IMR-90 (cell line): ENCODE measurements at regions of chr11 and their contacts with region 1.

Region 1: DNA sequence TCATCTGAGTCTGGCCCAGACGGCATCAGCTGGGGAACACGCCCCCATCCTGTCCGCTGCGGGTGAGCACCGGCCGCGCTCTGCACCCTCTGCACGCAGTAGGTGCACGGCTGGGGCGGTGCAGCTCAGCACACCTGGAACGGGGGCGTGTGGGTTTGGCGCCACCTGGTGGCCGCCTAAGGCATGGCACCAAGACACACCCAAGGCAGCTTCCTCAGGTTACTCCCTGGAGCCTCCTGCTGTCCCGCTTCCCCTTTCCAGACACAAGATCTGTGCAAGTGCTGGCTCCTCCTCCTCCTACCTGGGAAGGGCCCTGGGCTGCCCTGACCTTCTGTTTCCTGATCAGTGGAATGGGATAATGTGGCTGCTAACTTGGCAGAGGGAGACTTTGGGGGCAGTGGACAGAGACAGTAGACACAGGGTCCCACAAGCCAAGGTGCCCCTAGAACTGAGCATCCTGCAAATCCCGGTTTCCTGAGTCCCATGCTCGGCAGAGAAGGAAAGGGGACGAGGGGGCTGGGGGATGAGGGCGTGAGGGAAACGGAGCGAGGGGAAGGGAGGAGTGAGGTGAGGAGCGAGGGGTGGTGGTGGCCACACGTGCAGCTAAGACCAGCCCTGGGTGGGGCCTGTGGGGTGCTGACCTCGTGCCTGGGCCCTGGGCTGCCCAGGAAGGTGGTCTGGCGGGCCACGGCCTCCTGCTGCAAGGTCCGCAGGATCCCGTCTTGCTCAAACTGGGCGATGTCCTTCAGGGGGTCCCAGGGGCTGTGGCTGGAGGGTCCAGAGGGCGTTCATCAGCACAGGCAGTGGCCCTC is 34.8 kb upstream of the CARS1 start:
- DNase-seq: peak; percentile 44
- ATAC-seq: peak; percentile 64
- H3K4me3 ChIP-seq: no peak overlapping the region
- H3K27ac ChIP-seq: no peak overlapping the region
- H3K4me1 ChIP-seq: peaks cover 9% of the 10 kb centered on the region
- H3K27me3 ChIP-seq: no peaks in the 10 kb centered on the region
- CTCF ChIP-seq: peak; percentile 96
- POLR2A ChIP-seq: no peak
- RAD21 ChIP-seq: peak; percentile 93

Region 2: DNA sequence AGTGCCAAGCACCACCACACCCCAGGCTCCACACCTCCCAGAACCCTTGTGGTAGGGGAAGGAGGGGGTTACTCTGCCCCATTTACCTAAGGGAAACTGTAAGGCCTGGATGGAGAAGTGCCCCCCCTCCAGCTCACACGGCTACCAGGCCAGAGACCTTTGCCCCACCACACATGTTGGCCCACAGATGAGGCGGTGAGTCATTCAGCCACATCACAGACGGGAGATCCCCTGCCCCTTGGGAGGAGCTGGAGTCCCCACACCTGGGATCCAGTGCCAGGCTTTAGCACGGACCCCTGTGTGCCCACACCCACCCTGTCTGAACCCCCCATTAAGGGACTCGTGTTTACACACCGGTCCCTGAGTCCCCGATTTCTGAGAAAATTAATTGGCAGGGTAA is 231.4 kb before region 1 on chr11:
- CTCF ChIA-PET with region 1: no interaction called
- POLR2A ChIA-PET with region 1: no interaction called
- dilution Hi-C with region 1: no loop called
- in situ Hi-C with region 1: no loop called
- intact Hi-C with region 1: no loop called
- DNase-seq: peak; percentile 51
- ATAC-seq: no peak
- H3K4me3 ChIP-seq: no peak overlapping the region
- H3K27ac ChIP-seq: no peak overlapping the region
- H3K4me1 ChIP-seq: peaks cover 2% of the 10 kb centered on the region; the same call in 1 of the 2 replicates
- H3K27me3 ChIP-seq: peaks cover 70% of the 10 kb centered on the region
- CTCF ChIP-seq: no peak
- POLR2A ChIP-seq: no peak
- RAD21 ChIP-seq: no peak

Region 3: GRCh38 chr11:3037040-3037944 is 54.7 kb before region 1 on chr11:
- CTCF ChIA-PET with region 1: interaction called, 11 read pairs
- POLR2A ChIA-PET with region 1: no interaction called
- dilution Hi-C with region 1: no loop called
- in situ Hi-C with region 1: loop called (anchors 5 kb)
- intact Hi-C with region 1: loop called (anchors 5 kb)
- DNase-seq: peak; percentile 61
- ATAC-seq: peak; percentile 91
- H3K4me3 ChIP-seq: no peak overlapping the region
- H3K27ac ChIP-seq: no peak overlapping the region
- H3K4me1 ChIP-seq: no peaks in the 10 kb centered on the region
- H3K27me3 ChIP-seq: no peaks in the 10 kb centered on the region
- CTCF ChIP-seq: peak; percentile 76
- POLR2A ChIP-seq: no peak
- RAD21 ChIP-seq: peak; percentile 84

Region 4: DNA sequence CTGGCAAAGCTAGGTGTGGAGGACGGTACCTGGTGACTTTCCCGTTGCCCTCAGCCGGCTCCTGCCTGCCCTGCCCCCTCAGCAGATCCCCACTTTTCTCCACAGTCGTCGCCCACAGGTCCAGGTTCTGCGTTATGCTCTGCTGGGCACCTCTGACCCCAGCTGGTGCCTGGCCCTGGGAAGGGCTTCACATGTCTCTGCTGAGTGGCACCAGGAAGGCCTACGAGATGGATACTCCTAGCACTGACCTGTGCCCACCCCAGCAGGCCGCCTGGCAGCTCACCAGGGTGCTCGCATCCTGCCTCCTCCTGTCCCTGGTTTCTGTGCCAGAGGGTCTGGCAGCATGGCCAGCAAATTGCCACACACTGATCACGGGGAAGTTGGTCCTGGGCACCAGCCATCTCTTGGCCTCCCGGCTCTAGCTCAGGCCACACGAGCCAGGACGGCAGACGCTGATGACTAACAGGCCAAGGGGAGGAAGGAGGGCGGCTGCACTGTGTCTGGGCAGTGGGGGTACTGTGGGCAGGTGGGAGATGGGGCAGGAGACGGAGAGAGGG is 48.6 kb before region 1 on chr11:
- CTCF ChIA-PET with region 1: interaction called, 11 read pairs
- POLR2A ChIA-PET with region 1: no interaction called
- dilution Hi-C with region 1: no loop called
- in situ Hi-C with region 1: loop called (anchors 5 kb)
- intact Hi-C with region 1: loop called (anchors 5 kb)
- DNase-seq: no peak
- ATAC-seq: peak; percentile 41; the same call in 1 of the 2 replicates
- H3K4me3 ChIP-seq: no peak overlapping the region
- H3K27ac ChIP-seq: no peak overlapping the region
- H3K4me1 ChIP-seq: peaks cover 5% of the 10 kb centered on the region; the same call in 1 of the 2 replicates
- H3K27me3 ChIP-seq: no peaks in the 10 kb centered on the region
- CTCF ChIP-seq: no peak
- POLR2A ChIP-seq: no peak
- RAD21 ChIP-seq: no peak

Region 5: GRCh38 chr11:3049430-3050243 is 42.4 kb before region 1 on chr11:
- CTCF ChIA-PET with region 1: interaction called, 10 read pairs
- POLR2A ChIA-PET with region 1: no interaction called
- dilution Hi-C with region 1: no loop called
- in situ Hi-C with region 1: loop called (anchors 5 kb)
- intact Hi-C with region 1: loop called (anchors 2 kb)
- DNase-seq: peak; percentile 98
- ATAC-seq: peak; percentile 92
- H3K4me3 ChIP-seq: no peak overlapping the region
- H3K27ac ChIP-seq: peak overlapping the region; percentile 65
- H3K4me1 ChIP-seq: peaks cover 23% of the 10 kb centered on the region
- H3K27me3 ChIP-seq: no peaks in the 10 kb centered on the region
- CTCF ChIP-seq: peak; percentile 72
- POLR2A ChIP-seq: peak; percentile 21; the same call in 1 of the 2 replicates
- RAD21 ChIP-seq: peak; percentile 74